Cardiac septum (tissue), 1 donor: ENCODE measurements at regions of chr9 and their contacts with region 1.

Region 1: DNA sequence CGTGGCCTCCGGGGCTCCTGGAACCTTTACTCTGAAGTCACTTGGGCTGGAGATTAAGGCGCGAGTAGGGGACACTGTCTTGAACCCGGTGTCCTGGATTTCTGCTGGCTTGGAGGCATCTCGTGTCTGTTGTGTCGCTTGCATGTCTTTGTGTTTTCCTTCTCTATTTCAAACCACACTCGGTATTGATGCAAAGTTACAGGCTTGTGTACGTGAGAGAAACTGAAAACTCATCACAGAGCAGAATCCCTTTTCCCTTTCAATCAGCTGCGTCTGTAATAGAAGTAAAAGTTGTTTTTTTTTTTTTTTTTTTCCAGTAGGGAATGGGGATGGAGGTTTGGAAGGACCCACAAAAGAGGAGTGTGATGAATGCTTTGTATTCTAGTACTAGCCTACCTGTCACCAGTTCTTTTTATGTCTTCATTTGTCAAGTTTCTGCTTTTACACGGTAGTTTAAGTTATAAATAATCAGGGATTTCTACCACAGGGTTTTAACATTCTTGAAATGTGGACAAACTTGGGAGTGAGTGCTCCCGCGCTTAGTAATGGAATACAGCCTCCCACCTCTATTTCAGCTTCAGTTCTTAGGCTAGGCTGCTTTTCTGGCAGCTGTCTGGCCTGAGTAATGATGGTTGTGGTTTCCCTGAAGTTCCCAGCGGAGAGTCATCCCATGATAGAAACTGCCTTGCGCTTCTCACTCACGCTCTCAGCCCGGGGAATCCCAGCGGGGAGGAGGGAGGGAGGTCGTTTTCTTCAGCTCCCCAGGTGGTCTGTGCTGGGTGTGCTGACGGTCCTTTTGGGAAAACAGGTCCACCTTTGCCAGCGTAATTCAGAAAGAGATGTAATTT is 763 bp downstream of the TJP2 start:
- DNase-seq: peak; percentile 79

Region 2: DNA sequence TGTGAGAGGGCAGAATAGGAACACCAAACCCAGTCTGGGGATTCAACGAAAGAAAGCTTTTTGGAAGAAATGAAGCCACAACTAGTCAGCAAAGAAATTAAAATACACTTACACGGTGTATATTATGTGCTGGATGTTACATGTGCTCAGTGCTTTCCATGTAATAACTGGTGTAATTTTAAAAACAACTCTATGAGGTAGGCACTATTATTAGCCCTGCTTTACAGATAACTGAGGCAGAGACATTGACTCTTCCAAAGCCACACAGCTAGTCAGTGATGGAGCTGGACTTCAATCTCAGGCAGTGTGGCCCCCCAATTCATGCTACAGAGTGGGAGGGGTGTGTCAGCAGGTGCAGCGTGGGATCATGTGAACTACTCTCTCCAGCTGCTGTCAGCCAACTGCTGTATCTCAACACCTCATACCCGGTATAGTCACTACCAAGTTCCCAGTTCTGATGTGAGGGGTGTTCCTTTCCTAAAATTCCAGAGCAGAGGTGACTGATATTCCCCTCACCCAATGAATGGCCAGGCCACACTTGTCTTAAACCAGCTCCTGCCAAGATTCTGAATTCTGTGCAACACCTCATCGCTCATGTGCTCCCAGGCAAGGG is 34.6 kb before region 1 on chr9:
- intact Hi-C with region 1: loop called (anchors 2 kb)
- DNase-seq: no peak